Psoas muscle (tissue), 8 donors: ENCODE measurements at regions of chr15 and their contacts with region 1.

Region 1: GRCh38 chr15:63048115-63048775 is 5.7 kb downstream of the TPM1 start:
- DNase-seq: peak; percentile 92 to 97
- ATAC-seq: peak; percentile 80 to 95 (median 84)
- H3K4me3 ChIP-seq: peak overlapping the region; percentile 75
- H3K27ac ChIP-seq: peak overlapping the region; percentile 94
- H3K4me1 ChIP-seq: peaks cover 67% of the 10 kb centered on the region
- H3K27me3 ChIP-seq: no peaks in the 10 kb centered on the region
- CTCF ChIP-seq: peak; percentile 94

Region 2: DNA sequence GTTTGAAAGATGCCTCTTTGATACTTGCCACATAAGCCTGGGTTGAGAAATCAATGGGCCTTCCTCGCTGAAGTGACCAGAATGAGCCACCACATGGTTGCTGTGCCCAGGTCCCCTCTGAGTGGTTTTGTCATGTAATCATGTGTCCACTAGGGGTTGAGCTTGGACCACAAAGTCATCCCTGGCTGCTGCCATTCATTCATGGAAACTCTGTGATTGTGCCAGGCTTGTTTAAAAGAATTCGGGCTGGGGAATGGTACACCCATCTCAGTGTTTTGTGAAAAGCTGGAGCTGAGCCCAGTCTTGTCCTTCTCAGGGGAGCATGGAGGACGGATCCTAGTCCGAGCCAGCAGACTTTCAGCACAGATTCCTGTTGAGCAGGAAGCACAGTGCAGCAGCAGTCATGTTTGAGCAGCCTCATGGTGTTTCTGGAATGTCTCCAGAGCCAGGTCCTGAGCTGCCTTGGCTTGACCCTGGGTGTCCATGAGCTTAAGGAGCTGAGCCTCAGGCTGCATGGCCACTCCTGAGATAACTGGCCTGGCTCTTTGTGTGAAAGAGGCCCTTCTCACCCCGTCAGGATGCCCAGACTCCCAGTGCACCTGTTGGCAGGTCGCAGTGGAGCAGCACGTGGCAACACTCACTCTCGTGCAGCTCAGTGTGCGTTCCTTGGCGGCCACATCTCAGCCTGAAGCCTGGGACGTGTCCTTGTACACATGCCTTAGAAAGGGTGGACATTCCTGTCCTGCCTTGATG is 266.0 kb before region 1 on chr15:
- intact Hi-C with region 1: loop called in 1 of 2 experiments (anchors 5 kb)
- DNase-seq: peak; percentile 57 to 71
- ATAC-seq: peak; percentile 88 to 90 (median 89)
- H3K4me3 ChIP-seq: no peak overlapping the region
- H3K27ac ChIP-seq: no peak overlapping the region
- H3K4me1 ChIP-seq: no peaks in the 10 kb centered on the region
- H3K27me3 ChIP-seq: no peaks in the 10 kb centered on the region
- CTCF ChIP-seq: peak; percentile 66

Region 3: DNA sequence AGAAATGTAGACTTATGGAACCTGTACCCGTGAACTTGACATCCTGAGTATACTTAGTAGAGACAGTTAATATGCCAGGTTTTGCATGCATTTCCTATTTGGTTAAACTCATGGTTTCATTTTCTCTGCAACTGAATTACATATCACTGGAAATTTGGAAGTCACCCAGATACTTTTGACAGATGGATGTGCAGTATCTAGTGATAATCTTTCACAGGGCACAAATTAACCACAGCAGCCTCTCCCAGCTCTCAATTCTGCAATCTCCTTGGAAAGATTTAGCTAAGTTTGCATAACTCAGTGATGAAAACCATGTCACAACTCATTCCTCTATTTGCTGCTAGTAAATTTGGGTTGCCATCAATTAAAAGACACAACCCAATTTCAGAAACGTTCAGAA is 168.0 kb before region 1 on chr15:
- intact Hi-C with region 1: no loop called
- DNase-seq: no peak
- ATAC-seq: peak in 3 of 4 donors; percentile 61 to 76 (median 65)
- H3K4me3 ChIP-seq: no peak overlapping the region
- H3K27ac ChIP-seq: no peak overlapping the region
- H3K4me1 ChIP-seq: no peaks in the 10 kb centered on the region
- H3K27me3 ChIP-seq: peaks cover 0 to 3% (median 1%) of the 10 kb centered on the region in 3 donors
- CTCF ChIP-seq: no peak

Region 4: GRCh38 chr15:63019539-63020109 is 28.6 kb before region 1 on chr15:
- intact Hi-C with region 1: no loop called
- DNase-seq: peak; percentile 63 to 86
- ATAC-seq: peak; percentile 90 to 96 (median 94)
- H3K4me3 ChIP-seq: peak overlapping the region; percentile 16
- H3K27ac ChIP-seq: peak overlapping the region; percentile 82
- H3K4me1 ChIP-seq: peaks cover 33% of the 10 kb centered on the region
- H3K27me3 ChIP-seq: no peaks in the 10 kb centered on the region
- CTCF ChIP-seq: no peak